ENCODE measurements at regions of chr12 and their contacts with region 1.

Region 1: DNA sequence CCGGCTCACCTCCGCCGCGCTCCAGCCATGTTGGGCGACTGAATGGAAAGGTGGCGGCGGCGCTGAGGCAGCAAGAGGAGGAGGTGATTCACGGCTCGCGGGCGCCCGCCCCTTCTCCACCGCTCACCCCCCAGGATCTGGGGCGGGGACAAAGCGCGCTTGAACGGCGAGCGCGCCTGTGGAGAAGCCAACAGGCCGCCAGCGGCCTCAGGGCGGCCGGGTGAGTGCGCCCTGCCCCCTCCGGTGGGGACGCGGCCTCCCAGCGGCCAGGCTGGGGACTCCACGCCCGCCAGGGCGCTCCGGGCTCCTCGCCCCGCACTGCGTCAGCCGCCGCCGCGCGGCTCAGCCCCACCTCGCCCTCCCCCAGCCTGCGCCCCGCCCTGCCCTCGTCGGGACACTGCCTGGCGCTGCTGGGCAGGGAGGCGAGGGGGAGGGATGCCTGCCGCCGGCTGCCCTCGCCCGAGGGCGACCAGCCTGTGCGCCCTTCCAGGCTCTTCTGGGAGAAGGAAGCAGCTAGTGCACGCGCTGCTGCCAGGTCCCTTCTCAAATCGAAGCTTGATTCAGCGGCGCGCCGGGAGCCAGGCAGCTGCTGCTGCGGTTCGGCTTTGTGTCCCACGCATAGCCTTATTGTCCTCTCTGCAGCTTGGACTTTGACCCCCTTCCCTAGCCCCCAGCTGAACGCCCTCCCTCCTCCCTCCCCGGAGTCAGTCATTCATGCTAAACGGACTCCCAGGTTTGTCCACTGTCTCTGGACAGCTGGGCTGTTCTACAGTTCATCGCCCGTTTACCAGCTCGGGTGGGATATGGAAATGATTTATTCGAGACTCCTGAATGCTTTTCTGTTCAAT is at the start of gene KIF21A:
- DNase-seq: peak; percentile 80
- ATAC-seq: peak; percentile 98
- H3K4me3 ChIP-seq: peak within 1 kb of the TSS; percentile 81 to 84
- H3K27ac ChIP-seq: peak within 1 kb of the TSS; percentile 95
- H3K4me1 ChIP-seq: peaks cover 25% of the 10 kb centered on the region
- H3K27me3 ChIP-seq: no peaks in the 10 kb centered on the region
- CTCF ChIP-seq: peak; percentile 71
- total RNA-seq, gene KIF21A: 25.6 TPM

Region 2: DNA sequence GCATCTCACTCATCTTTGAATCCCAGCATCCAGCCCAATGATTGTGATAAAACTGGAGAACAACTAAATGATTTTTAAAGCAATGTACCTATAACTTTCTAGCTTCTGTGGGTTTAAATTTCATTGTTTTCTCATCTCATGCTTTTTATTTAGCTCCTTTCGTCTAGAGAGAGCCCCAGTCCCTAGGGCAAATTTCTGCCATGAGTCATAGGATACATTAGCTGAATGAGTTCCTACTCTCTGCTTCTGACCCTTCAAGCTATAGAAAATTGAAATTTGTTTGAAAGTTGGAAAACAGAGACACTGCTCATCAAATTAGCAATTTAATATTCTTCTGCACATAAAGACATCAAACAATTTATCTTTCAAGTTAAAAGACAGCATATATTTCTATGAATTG is 114.3 kb before region 1 on chr12:
- CTCF ChIA-PET with region 1: no interaction called
- POLR2A ChIA-PET with region 1: no interaction called
- in situ Hi-C with region 1: no loop called
- intact Hi-C with region 1: loop called (anchors 5 kb)
- DNase-seq: no peak
- ATAC-seq: no peak
- H3K4me3 ChIP-seq: no peak overlapping the region
- H3K27ac ChIP-seq: no peak overlapping the region
- H3K4me1 ChIP-seq: no peaks in the 10 kb centered on the region
- H3K27me3 ChIP-seq: no peaks in the 10 kb centered on the region
- CTCF ChIP-seq: no peak

Region 3: GRCh38 chr12:39619660-39620433 is 176.5 kb after region 1 on chr12 and contains the start of gene ABCD2:
- CTCF ChIA-PET with region 1: no interaction called
- POLR2A ChIA-PET with region 1: no interaction called
- in situ Hi-C with region 1: no loop called
- intact Hi-C with region 1: loop called (anchors 10 kb)
- DNase-seq: peak; percentile 25
- ATAC-seq: peak; percentile 96
- H3K4me3 ChIP-seq: peak within 1 kb of the TSS; percentile 58 to 82
- H3K27ac ChIP-seq: no peak within 1 kb of the TSS
- H3K4me1 ChIP-seq: peaks cover 7% of the 10 kb centered on the region; the same call in 1 of the 2 replicates
- H3K27me3 ChIP-seq: peaks cover 3% of the 10 kb centered on the region; the same call in 1 of the 2 replicates
- CTCF ChIP-seq: peak; percentile 23; the same call in 1 of the 2 replicates
- total RNA-seq, gene ABCD2: not detected